Naive thymus-derived CD8-positive, alpha-beta T cell (primary cell): ENCODE measurements at regions of chr15 and their contacts with region 1.

Region 1: DNA sequence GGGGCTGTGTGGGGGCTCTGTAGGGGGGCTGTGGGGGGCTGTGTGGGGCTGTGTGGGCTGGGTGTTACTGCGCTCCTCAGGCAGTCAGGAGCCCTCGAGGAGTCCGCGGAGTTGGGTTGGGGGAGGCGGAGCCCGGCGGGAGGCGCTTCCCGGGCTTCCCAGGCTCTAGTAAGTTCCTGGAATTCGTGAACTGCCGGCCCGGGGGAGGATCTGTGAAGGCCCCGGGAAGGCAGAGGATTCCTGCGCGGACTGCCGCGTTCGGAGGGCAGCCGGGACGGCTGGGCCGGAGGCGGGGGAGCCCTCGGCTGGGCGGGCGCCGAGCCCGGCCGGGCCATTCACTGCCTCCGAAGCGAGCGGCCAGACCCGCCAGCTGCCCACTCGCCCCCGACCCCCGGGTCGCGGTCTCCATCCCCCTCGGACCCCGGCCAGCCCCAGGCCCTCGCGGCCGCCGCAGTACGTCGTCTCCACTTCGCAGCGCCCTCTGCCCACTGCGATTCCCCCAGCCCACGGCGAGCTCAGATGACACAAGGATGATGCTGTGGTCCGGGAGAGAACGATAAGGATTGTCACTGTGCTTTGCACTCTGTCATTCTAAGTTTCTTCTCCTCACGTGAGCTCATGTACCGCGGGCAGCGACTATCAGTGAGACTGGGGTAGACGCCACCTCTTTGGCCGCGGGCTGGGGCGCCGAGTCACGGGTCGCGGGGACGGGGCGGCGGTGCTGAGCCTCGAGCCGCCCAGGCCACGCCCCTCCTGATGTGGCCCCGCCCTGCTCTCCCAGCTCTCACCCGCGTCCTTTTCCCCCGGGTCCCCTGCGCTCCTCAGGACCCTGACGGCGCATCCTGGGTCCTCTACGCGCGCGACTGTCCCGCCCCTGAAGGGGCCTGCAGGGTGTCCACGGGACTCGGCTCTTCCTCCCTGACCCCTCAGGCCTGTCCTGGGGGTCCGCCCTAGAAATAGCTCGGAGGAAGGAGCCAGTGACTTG is 65.3 kb downstream of the KLF13 start:
- DNase-seq: peak; percentile 69 to 88 (median 81)
- ATAC-seq: peak; percentile 74 to 83
- H3K4me3 Mint-ChIP-seq: peak overlapping the region; percentile 86 to 97 (median 95)
- H3K27ac Mint-ChIP-seq: peak overlapping the region; percentile 79 to 98 (median 97)
- H3K4me1 Mint-ChIP-seq: peaks cover 35 to 67% (median 57%) of the 10 kb centered on the region in 4 donors
- H3K27me3 Mint-ChIP-seq: no peaks in the 10 kb centered on the region

Region 2: GRCh38 chr15:31379042-31379441 is 12.9 kb before region 1 on chr15:
- POLR2A ChIA-PET with region 1: interaction called, 21 read pairs
- DNase-seq: peak in 2 of 10 donors; percentile 33 to 36
- ATAC-seq: peak; percentile 30 to 41
- H3K4me3 Mint-ChIP-seq: peak overlapping the region in 8 of 10 donors; percentile 15 to 79 (median 74)
- H3K27ac Mint-ChIP-seq: peak overlapping the region; percentile 84 to 97 (median 94)
- H3K4me1 Mint-ChIP-seq: peaks cover 32 to 73% (median 70%) of the 10 kb centered on the region in 4 donors
- H3K27me3 Mint-ChIP-seq: no peaks in the 10 kb centered on the region

Region 3: GRCh38 chr15:31402511-31403056 is 10.6 kb after region 1 on chr15:
- POLR2A ChIA-PET with region 1: interaction called, 11 read pairs
- DNase-seq: no peak
- ATAC-seq: no peak
- H3K4me3 Mint-ChIP-seq: no peak overlapping the region
- H3K27ac Mint-ChIP-seq: peak overlapping the region in 3 of 10 donors; percentile 74 to 93 (median 86)
- H3K4me1 Mint-ChIP-seq: peaks cover 28 to 73% (median 69%) of the 10 kb centered on the region in 4 donors
- H3K27me3 Mint-ChIP-seq: no peaks in the 10 kb centered on the region